ENCODE measurements at regions of chr6 and their contacts with region 1.

Region 1: GRCh38 chr6:121055572-121056163 is 278.6 kb downstream of the TBC1D32 start:
- DNase-seq: peak in 1 of 2 experiments; percentile 3
- H3K4me3 ChIP-seq: no peak overlapping the region
- H3K27ac ChIP-seq: no peak overlapping the region
- H3K4me1 ChIP-seq: no peaks in the 10 kb centered on the region
- H3K27me3 ChIP-seq: no peaks in the 10 kb centered on the region
- CTCF ChIP-seq: peak in 2 of 3 experiments; percentile 60 to 69; a peak in 3 of 4 replicates
- EP300 ChIP-seq: no peak
- POLR2A ChIP-seq: no peak
- RAD21 ChIP-seq: peak; percentile 89 to 92

Region 2: GRCh38 chr6:121105461-121105860 is 49.8 kb after region 1 on chr6:
- CTCF ChIA-PET with region 1: no interaction called
- POLR2A ChIA-PET with region 1: no interaction called
- DNase-seq: no peak
- H3K4me3 ChIP-seq: peak overlapping the region in 1 of 4 experiments; percentile 18; a peak in 1 of 8 replicates
- H3K27ac ChIP-seq: no peak overlapping the region
- H3K4me1 ChIP-seq: peaks cover 0 to 5% (median 0%) of the 10 kb centered on the region in 4 experiments; a peak in 2 of 7 replicates
- H3K27me3 ChIP-seq: no peaks in the 10 kb centered on the region
- CTCF ChIP-seq: no peak
- EP300 ChIP-seq: no peak
- POLR2A ChIP-seq: no peak
- RAD21 ChIP-seq: no peak

Region 3: DNA sequence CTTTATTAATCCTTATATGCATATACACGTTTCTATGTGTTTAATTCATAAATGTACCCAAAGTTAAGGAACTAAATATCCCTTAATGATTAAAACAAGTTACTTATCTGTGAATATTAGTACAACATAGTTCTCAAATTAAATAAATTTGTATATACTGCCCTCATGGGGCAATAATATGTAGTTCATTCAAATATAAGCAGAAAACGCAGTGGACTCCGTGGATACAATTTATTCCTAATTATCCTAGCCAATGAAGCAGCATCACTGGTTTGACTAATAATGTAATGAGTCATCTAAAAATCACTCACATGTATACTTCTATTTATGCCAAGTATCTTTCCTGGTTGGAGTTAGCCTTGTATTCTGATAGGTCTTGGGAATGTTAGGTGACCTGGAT is 167.0 kb after region 1 on chr6:
- CTCF ChIA-PET with region 1: interaction called, 37 read pairs
- POLR2A ChIA-PET with region 1: no interaction called
- DNase-seq: no peak
- H3K4me3 ChIP-seq: no peak overlapping the region
- H3K27ac ChIP-seq: no peak overlapping the region
- H3K4me1 ChIP-seq: no peaks in the 10 kb centered on the region
- H3K27me3 ChIP-seq: no peaks in the 10 kb centered on the region
- CTCF ChIP-seq: no peak; a peak in 1 of 4 replicates
- EP300 ChIP-seq: no peak
- POLR2A ChIP-seq: no peak
- RAD21 ChIP-seq: peak in 1 of 2 experiments; percentile 23; a peak in 3 of 4 replicates

Region 4: GRCh38 chr6:121305957-121306607 is 250.4 kb after region 1 on chr6:
- CTCF ChIA-PET with region 1: interaction called, 47 read pairs
- POLR2A ChIA-PET with region 1: no interaction called
- DNase-seq: no peak
- H3K4me3 ChIP-seq: no peak overlapping the region
- H3K27ac ChIP-seq: no peak overlapping the region
- H3K4me1 ChIP-seq: no peaks in the 10 kb centered on the region
- H3K27me3 ChIP-seq: no peaks in the 10 kb centered on the region
- CTCF ChIP-seq: peak in 2 of 3 experiments; percentile 49 to 69; a peak in 2 of 4 replicates
- EP300 ChIP-seq: no peak
- POLR2A ChIP-seq: no peak
- RAD21 ChIP-seq: peak; percentile 84 to 85

Measured in H1 (cell line).